Prostate gland (tissue), 2 donors: ENCODE measurements at regions of chr17 and their contacts with region 1.

Region 1: GRCh38 chr17:38735161-38735997 is 5.2 kb downstream of the CISD3 start:
- DNase-seq: no peak
- H3K4me3 ChIP-seq: no peak overlapping the region
- H3K27ac ChIP-seq: peak overlapping the region; percentile 17 to 81
- H3K4me1 ChIP-seq: peaks cover 31% of the 10 kb centered on the region
- H3K27me3 ChIP-seq: no peaks in the 10 kb centered on the region
- CTCF ChIP-seq: peak; percentile 89 to 97 (median 94)
- POLR2A ChIP-seq: no peak

Region 2: GRCh38 chr17:38676706-38677504 is 58.5 kb before region 1 on chr17:
- intact Hi-C with region 1: loop called (anchors 2 kb)
- DNase-seq: peak; percentile 75
- H3K4me3 ChIP-seq: no peak overlapping the region
- H3K27ac ChIP-seq: no peak overlapping the region
- H3K4me1 ChIP-seq: peaks cover 3% of the 10 kb centered on the region
- H3K27me3 ChIP-seq: no peaks in the 10 kb centered on the region
- CTCF ChIP-seq: peak; percentile 68 to 99 (median 90)
- POLR2A ChIP-seq: no peak

Region 3: DNA sequence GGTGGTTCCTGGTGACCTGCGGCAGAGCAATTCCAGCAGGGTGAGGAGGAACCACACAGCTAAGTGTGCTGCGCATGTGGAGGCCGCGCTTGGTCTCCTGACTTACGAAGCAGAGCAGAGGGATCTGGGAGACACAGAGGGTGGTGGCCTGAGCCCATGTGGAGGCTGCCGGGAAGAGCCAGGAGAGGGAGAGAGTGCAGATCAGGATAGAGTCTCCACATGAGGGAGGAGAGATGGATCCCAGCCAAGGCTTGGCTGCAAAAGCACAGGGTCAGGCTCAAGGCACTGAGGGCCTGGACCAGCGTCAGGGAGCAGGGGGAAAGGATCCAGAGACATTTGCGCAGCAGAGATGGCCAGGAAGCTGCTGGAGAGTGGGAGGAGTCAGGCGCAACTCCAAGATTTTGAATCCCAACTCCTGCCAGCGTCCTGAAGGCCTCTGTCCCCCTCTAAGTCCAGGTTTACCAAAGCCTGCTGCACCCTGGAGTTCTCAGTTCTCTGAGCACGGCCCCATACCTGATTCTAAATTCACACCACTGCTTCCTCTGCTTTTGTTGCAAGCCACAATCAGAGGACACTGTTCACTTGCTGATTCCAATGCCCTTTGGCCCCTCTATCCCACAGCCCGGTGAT is 41.6 kb before region 1 on chr17:
- intact Hi-C with region 1: no loop called
- DNase-seq: peak; percentile 43
- H3K4me3 ChIP-seq: no peak overlapping the region
- H3K27ac ChIP-seq: peak overlapping the region; percentile 38 to 63
- H3K4me1 ChIP-seq: no peaks in the 10 kb centered on the region
- H3K27me3 ChIP-seq: no peaks in the 10 kb centered on the region
- CTCF ChIP-seq: no peak
- POLR2A ChIP-seq: no peak